Mammary epithelial cell (primary cell): ENCODE measurements at regions of chr7 and their contacts with region 1.

Region 1: DNA sequence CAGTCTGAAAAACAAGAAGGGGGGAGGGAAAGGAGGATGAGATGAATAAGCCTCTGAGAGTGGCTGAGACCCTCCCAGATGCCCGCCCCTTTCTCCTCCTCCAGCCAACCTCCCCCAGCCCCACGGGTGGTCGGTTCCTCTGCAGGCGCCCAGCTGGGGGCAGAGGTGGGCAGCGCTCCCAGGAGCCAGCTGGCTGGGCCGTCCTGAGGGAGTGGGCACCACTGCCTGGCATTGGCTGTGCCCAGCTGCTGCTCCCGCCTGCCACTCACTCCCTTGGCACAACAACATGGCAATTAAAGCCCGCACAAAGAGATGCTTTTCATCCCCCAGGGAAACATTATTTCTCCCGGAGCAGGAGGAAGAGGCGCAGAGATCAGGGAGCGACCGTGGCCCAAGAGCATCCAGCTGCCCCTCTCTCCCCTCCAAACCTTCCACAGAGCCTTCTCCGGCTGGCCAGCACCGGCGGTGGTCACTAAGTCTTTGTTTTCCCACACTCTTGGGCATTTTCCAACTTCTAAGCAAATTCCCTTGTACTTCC is 107.2 kb downstream of the SPDYE5 start:
- DNase-seq: no peak
- H3K4me3 ChIP-seq: no peak overlapping the region
- H3K27ac ChIP-seq: no peak overlapping the region
- H3K4me1 ChIP-seq: peaks cover 6% of the 10 kb centered on the region
- H3K27me3 ChIP-seq: no peaks in the 10 kb centered on the region
- CTCF ChIP-seq: no peak

Region 2: GRCh38 chr7:75534727-75535307 is 64.5 kb before region 1 on chr7:
- CTCF ChIA-PET with region 1: no interaction called
- dilution Hi-C with region 1: no loop called
- in situ Hi-C with region 1: no loop called
- intact Hi-C with region 1: no loop called
- DNase-seq: no peak
- H3K4me3 ChIP-seq: no peak overlapping the region
- H3K27ac ChIP-seq: no peak overlapping the region
- H3K4me1 ChIP-seq: no peaks in the 10 kb centered on the region
- H3K27me3 ChIP-seq: no peaks in the 10 kb centered on the region
- CTCF ChIP-seq: no peak

Region 3: GRCh38 chr7:75546237-75547015 is 52.9 kb before region 1 on chr7:
- CTCF ChIA-PET with region 1: no interaction called
- dilution Hi-C with region 1: loop called (anchors 5 kb)
- in situ Hi-C with region 1: no loop called
- intact Hi-C with region 1: no loop called
- DNase-seq: no peak
- H3K4me3 ChIP-seq: no peak overlapping the region
- H3K27ac ChIP-seq: no peak overlapping the region
- H3K4me1 ChIP-seq: no peaks in the 10 kb centered on the region
- H3K27me3 ChIP-seq: no peaks in the 10 kb centered on the region
- CTCF ChIP-seq: no peak

Region 4: GRCh38 chr7:75667938-75668337 is 68.6 kb after region 1 on chr7:
- CTCF ChIA-PET with region 1: no interaction called
- dilution Hi-C with region 1: loop called (anchors 5 kb)
- in situ Hi-C with region 1: no loop called
- intact Hi-C with region 1: no loop called
- DNase-seq: no peak
- H3K4me3 ChIP-seq: no peak overlapping the region
- H3K27ac ChIP-seq: no peak overlapping the region
- H3K4me1 ChIP-seq: no peaks in the 10 kb centered on the region
- H3K27me3 ChIP-seq: no peaks in the 10 kb centered on the region
- CTCF ChIP-seq: no peak